ENCODE measurements at regions of chr19 and their contacts with region 1.

Region 1: DNA sequence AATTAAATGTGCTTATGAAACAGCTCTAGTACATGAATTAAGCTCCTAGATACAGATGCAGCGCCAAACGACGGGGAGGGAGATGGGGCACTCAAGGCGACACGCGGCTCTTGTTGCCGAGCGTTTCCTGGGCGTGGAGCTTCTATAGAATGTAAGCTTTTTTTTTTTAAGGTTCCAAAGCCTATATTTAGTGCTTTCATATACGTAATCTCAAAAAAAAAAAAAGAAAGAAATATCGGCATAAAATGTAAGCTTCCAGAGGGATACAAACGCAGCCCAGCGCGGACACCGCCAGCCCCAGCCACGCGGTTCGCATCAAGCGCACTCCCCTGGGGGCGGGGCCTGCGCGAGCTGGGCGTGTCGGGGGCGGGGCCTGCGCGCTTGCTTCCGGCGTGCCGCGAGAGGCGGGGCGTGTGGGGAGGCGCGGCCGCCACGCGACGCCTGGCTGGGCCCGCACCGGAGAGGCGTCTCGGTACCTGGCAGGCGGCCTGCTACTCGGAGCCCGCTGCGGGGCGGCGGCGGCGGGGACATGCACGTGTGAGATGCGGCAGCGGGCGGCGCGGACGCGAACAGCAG is at the start of gene URI1:
- DNase-seq: peak; percentile 88 to 95 (median 91)
- H3K4me3 ChIP-seq: peak within 1 kb of the TSS; percentile 88 to 93
- H3K4me3 Mint-ChIP-seq: peak within 1 kb of the TSS; percentile 95 to 99 (median 96)
- H3K27ac ChIP-seq: peak within 1 kb of the TSS; percentile 78
- H3K27ac Mint-ChIP-seq: peak within 1 kb of the TSS; percentile 78 to 98 (median 95)
- H3K4me1 ChIP-seq: peaks cover 50% of the 10 kb centered on the region
- H3K4me1 Mint-ChIP-seq: peaks cover 28 to 48% (median 39%) of the 10 kb centered on the region in 4 donors
- H3K27me3 ChIP-seq: no peaks in the 10 kb centered on the region
- H3K27me3 Mint-ChIP-seq: peaks cover 0 to 6% of the 10 kb centered on the region in 2 donors
- total RNA-seq, gene URI1: 91.7 to 95.0 TPM

Region 2: DNA sequence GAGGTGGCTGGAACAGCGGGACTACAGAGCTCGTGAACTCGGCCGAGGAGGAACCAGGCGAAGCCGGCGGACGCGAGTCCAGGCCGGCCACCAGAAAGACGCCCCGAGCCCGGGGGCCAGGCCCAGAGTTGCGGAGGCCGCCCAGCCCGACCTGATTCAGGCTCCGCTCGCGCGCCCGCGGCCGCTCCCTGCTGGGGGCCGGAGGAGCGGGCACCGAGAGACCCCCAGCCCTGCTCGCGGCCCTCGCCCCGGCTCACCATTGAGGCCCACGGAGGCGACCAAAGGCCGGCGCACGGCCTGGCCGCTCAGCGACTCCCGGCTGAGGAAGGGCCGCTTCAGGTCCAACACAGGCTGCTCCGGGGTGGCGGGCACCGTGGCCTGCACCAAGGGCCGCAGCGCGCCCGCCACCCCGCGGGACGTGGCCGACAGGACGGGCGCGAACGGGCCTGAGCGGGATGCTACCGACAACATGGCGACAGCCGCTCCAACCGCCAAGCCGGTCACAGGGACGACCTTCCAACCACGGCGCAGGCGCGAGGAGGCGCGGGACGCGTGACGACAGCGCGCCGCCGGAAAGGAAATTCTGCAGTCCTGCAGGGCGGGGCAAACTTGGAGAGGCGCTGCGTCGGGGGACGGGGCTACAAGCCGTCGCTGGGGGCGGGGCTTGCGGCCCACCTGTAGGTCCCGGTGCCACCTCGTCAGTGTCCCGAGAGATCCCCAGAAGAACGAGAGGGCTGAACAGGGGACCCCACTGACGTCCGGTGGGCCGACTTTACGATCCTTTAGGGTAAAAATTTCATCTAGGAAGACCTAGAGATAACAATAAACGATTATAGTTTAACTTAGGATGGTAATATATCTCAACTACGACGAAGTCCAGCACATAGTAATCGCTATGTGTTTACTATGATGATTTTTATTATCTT is 729.0 kb before region 1 on chr19 and contains the start of gene UQCRFS1:
- CTCF ChIA-PET with region 1: no interaction called
- POLR2A ChIA-PET with region 1: no interaction called
- intact Hi-C with region 1: loop called (anchors 5 kb)
- DNase-seq: peak; percentile 93 to 96 (median 95)
- H3K4me3 ChIP-seq: peak within 1 kb of the TSS; percentile 75 to 82
- H3K4me3 Mint-ChIP-seq: peak within 1 kb of the TSS; percentile 93 to 99 (median 98)
- H3K27ac ChIP-seq: peak within 1 kb of the TSS; percentile 88
- H3K27ac Mint-ChIP-seq: peak within 1 kb of the TSS; percentile 94 to 99 (median 99)
- H3K4me1 ChIP-seq: peaks cover 36% of the 10 kb centered on the region
- H3K4me1 Mint-ChIP-seq: peaks cover 34 to 50% (median 42%) of the 10 kb centered on the region in 4 donors
- H3K27me3 ChIP-seq: no peaks in the 10 kb centered on the region
- H3K27me3 Mint-ChIP-seq: peaks cover 1 to 10% of the 10 kb centered on the region in 2 donors
- total RNA-seq, gene UQCRFS1: 16.2 to 17.6 TPM

Region 3: GRCh38 chr19:29671393-29672160 is 270.3 kb before region 1 on chr19:
- CTCF ChIA-PET with region 1: no interaction called
- POLR2A ChIA-PET with region 1: interaction called, 12 read pairs
- intact Hi-C with region 1: no loop called
- DNase-seq: peak; percentile 81 to 96 (median 86)
- H3K4me3 ChIP-seq: peak overlapping the region; percentile 14 to 46
- H3K4me3 Mint-ChIP-seq: peak overlapping the region; percentile 62 to 96 (median 76)
- H3K27ac ChIP-seq: peak overlapping the region; percentile 92
- H3K27ac Mint-ChIP-seq: peak overlapping the region; percentile 93 to 100 (median 98)
- H3K4me1 ChIP-seq: peaks cover 97% of the 10 kb centered on the region
- H3K4me1 Mint-ChIP-seq: peaks cover 58 to 96% (median 79%) of the 10 kb centered on the region in 4 donors
- H3K27me3 ChIP-seq: no peaks in the 10 kb centered on the region
- H3K27me3 Mint-ChIP-seq: no peaks in the 10 kb centered on the region

Region 4: DNA sequence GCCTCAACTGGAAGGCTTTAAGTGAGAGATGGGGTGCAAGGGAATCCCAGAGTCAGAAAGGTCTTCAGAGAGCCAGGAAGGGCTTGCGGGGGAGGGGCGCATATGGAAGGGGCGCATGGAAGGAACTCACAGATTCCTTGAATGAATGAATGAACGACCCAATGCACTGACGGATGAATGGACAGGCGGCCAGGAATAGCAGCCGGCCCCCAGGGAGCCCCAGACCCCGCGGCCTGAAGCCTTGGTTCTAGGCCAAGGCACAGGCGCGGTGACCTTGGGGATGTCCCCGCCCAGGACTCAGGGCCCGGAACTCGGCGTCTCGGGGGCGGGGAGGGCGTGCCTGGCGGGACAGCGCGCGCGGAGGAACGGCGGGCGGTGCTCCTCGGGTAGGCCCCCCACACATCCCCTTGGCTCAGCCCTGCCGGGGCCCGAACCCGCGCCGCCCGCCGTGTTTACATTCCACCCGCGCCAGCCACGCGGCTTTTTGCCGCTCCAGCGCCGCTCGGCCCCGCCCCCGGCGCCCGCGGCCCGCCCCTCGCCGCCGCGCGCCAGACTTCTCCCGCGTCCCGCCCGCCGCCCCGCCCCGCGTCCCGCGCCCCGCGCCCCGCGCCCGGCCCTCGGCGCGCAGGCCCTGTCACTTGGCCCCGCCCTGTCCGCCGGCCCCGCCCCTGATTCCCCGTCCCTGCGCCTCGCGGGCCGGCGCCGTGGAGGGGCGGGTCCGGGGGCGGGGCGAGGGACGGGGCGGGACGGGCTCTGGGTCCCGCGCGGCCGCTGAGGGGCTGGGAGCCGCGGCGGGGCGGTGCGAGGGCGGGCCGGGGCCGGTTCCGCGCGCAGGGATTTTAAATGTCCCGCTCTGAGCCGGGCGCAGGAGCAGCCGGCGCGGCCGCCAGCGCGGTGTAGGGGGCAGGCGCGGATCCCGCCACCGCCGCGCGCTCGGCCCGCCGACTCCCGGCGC is 130.5 kb before region 1 on chr19 and contains the start of gene CCNE1:
- CTCF ChIA-PET with region 1: no interaction called
- POLR2A ChIA-PET with region 1: interaction called, 3 read pairs
- intact Hi-C with region 1: loop called (anchors 1 kb)
- DNase-seq: peak; percentile 90 to 93 (median 92)
- H3K4me3 ChIP-seq: peak within 1 kb of the TSS in 1 of 2 donors; percentile 35
- H3K4me3 Mint-ChIP-seq: peak within 1 kb of the TSS; percentile 81 to 97 (median 86)
- H3K27ac ChIP-seq: peak within 1 kb of the TSS; percentile 52
- H3K27ac Mint-ChIP-seq: peak within 1 kb of the TSS; percentile 75 to 92 (median 88)
- H3K4me1 ChIP-seq: peaks cover 10% of the 10 kb centered on the region
- H3K4me1 Mint-ChIP-seq: peaks cover 6 to 17% (median 14%) of the 10 kb centered on the region in 4 donors
- H3K27me3 ChIP-seq: no peaks in the 10 kb centered on the region
- H3K27me3 Mint-ChIP-seq: no peaks in the 10 kb centered on the region
- total RNA-seq, gene CCNE1: 2.9 to 3.4 TPM

Region 5: GRCh38 chr19:30116984-30117555 is 175.2 kb after region 1 on chr19:
- CTCF ChIA-PET with region 1: no interaction called
- POLR2A ChIA-PET with region 1: no interaction called
- intact Hi-C with region 1: no loop called
- DNase-seq: no peak
- H3K4me3 ChIP-seq: no peak overlapping the region
- H3K4me3 Mint-ChIP-seq: no peak overlapping the region
- H3K27ac ChIP-seq: no peak overlapping the region
- H3K27ac Mint-ChIP-seq: no peak overlapping the region
- H3K4me1 ChIP-seq: no peaks in the 10 kb centered on the region
- H3K4me1 Mint-ChIP-seq: no peaks in the 10 kb centered on the region
- H3K27me3 ChIP-seq: no peaks in the 10 kb centered on the region
- H3K27me3 Mint-ChIP-seq: peaks cover 5 to 7% of the 10 kb centered on the region in 2 donors

Region 6: GRCh38 chr19:31451686-31452330 is 1509.9 kb after region 1 on chr19:
- CTCF ChIA-PET with region 1: no interaction called
- POLR2A ChIA-PET with region 1: no interaction called
- intact Hi-C with region 1: no loop called
- DNase-seq: no peak
- H3K4me3 ChIP-seq: no peak overlapping the region
- H3K4me3 Mint-ChIP-seq: no peak overlapping the region
- H3K27ac ChIP-seq: no peak overlapping the region
- H3K27ac Mint-ChIP-seq: no peak overlapping the region
- H3K4me1 ChIP-seq: no peaks in the 10 kb centered on the region
- H3K4me1 Mint-ChIP-seq: peaks cover 0 to 1% (median under 1%) of the 10 kb centered on the region in 4 donors
- H3K27me3 ChIP-seq: no peaks in the 10 kb centered on the region
- H3K27me3 Mint-ChIP-seq: peaks cover 7 to 17% of the 10 kb centered on the region in 2 donors